Astrocyte of the cerebellum (primary cell): ENCODE measurements at regions of chr3 and their contacts with region 1.

Region 1: DNA sequence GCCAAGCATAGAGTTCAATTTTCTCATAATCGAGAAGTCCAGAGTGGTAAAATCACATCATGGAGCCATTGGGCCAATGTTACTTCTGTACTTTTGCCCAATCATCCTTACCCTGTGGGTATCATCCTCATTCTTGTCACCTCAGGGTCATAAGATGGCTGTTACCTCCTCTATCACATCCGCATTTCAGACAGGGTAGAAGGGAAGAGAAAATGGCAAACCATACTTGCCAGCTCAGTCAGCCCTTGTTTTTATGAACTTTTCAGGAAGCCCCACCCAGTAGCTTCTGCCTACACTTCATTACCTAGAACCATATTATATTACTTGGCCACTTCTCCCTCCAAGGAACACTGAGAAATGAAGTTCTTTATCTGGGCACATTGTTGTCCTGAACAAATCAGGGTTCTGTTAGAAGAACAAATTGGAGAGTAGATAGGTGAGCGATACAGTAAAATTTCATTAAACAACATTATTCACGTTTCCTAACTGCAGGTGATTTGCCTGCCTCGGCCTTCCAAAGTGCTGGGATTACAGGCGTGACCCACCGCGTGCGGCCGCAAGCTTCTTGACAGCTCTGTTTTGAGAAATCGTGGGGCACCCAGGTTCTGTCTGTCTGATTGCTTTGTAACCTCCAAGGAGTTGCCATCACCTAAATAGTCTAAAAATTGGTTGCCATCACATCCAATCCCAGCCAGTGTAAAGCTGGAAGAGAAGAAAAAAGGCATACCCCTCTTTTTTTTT is 34.5 kb upstream of the RPN1 start:
- DNase-seq: no peak
- H3K4me3 ChIP-seq: no peak overlapping the region
- CTCF ChIP-seq: no peak

Region 2: GRCh38 chr3:128734523-128735189 is 49.5 kb after region 1 on chr3:
- in situ Hi-C with region 1: loop called (anchors 5 kb)
- DNase-seq: no peak
- H3K4me3 ChIP-seq: no peak overlapping the region
- CTCF ChIP-seq: no peak